Mammary epithelial cell (primary cell): ENCODE measurements at regions of chr17 and their contacts with region 1.

Region 1: DNA sequence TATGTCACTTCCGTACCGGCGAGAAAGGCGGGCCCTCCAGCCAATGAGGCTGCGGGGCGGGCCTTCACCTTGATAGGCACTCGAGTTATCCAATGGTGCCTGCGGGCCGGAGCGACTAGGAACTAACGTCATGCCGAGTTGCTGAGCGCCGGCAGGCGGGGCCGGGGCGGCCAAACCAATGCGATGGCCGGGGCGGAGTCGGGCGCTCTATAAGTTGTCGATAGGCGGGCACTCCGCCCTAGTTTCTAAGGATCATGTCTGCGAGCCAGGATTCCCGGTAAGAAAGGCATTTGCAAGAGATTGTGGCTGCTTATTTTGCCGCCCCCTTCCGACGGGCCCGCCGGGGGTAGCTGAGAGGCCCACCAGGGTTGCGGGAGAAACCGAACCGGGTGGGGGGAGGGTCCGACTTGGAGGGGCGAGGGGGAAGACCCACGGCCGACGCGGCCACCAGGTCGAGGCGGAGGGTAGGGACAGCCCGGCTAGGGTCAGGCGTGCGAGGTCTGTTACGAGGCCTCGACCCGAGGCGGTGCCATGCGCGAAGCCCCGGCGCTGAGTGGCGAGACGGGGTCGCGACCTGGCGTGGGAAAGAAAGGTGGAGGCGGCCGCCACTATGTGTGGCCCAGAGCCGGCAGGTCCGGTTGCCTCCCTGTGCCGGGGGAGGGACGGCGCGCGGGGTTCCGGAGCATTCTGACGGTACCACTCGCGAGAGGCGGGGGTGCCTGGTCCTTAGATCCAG is 6.7 kb upstream of the CD68 start:
- DNase-seq: peak; percentile 99
- H3K4me3 ChIP-seq: peak overlapping the region; percentile 95 to 98 (median 98)
- H3K27ac ChIP-seq: peak overlapping the region; percentile 95
- H3K4me1 ChIP-seq: peaks cover 38% of the 10 kb centered on the region
- H3K27me3 ChIP-seq: no peaks in the 10 kb centered on the region
- CTCF ChIP-seq: no peak

Region 2: DNA sequence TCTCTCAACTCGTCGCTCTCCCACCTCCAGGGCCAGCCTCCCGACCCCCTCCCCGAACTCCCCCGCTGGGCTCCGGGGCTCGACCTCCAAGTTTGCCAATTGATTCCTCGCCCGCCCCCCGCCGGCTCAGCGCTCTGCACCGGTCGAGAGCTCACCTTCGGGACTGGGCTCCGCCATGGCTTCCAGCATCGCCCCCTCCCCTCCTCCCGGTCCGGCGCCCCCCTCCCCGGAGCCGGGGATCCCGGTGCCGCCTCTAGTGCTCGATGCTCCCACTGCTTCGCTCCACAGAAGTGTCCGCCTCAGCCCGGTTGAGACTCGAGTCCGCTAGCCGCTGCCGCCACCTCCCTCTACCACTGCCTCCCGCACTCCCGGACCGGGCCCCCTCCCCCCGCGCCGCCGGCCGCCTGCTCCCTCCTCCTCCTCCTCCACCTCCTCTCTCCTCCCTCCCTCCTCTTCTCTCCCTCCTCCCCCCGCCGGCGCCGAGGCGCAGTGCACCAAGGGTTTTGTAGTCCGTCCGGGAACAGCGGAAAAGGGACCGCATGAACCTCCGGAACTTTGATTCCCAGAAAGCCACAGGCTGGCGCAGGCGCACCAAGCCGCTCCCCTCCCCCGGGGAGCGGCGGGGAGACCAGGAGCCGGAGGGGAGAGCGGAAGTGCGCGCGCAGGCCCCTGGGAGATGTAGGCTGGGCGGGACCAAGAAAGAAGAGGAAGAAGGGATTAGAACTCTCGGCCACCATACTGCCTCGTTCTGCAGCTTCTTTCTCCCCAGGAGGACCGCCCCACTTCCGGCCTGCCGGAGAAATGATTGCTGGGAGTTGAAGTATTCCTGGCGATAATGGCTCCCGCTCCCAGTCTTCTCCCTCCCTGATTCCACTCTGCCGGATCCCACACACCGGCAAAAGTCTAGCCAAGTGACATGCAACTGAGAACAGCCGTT is 333.4 kb before region 1 on chr17 and contains the start of gene PHF23:
- CTCF ChIA-PET with region 1: no interaction called
- dilution Hi-C with region 1: no loop called
- in situ Hi-C with region 1: no loop called
- intact Hi-C with region 1: loop called (anchors 2 kb)
- DNase-seq: peak; percentile 100
- H3K4me3 ChIP-seq: peak within 1 kb of the TSS; percentile 84 to 92 (median 90)
- H3K27ac ChIP-seq: peak within 1 kb of the TSS; percentile 79
- H3K4me1 ChIP-seq: peaks cover 45% of the 10 kb centered on the region
- H3K27me3 ChIP-seq: no peaks in the 10 kb centered on the region
- CTCF ChIP-seq: peak in 1 of 2 donors; percentile 7
- total RNA-seq, gene PHF23: 36.7 to 53.6 TPM

Region 3: DNA sequence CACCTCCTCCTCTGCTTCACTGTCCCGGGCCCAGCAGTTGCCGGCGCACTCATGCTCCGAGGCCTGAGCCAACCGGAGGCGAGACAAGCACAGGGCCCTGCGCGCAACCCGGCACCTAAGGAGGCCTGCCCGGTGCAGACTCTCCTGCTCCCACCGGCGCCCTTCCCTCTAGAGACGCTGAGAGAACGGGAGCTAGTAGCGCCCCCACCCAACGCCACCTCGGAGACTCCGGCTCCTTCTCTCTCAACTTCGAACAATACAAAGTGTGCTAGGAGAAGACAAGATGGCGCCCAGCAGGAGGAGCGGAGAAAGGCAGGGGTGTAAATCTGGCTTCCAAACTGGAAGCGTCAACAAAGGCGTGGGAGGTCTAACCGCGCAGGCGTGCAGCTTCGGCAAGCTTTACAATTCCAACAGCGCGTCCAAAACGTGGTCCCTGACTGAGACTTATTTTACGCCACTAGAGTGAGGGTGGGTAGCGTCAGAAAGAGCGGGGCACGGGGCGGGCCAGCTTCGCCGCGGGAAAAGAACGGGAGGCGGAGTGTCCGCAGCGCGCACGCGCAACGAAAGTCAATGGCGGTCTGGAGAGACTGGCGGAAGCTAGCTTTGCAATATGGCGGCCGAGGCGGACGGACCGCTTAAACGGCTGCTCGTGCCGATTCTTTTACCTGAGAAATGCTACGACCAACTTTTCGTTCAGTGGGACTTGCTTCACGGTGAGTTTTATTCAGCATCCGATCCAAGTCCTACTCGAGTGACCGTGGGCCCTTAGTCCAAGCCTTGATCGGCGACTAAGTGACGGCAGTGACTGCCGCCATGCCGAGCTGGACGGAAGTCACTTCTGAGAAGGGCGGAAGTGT is 10.7 kb after region 1 on chr17 and contains the start of gene MPDU1:
- CTCF ChIA-PET with region 1: no interaction called
- dilution Hi-C with region 1: no loop called
- in situ Hi-C with region 1: no loop called
- intact Hi-C with region 1: loop called (anchors 1 kb)
- DNase-seq: peak; percentile 95
- H3K4me3 ChIP-seq: peak within 1 kb of the TSS; percentile 42 to 63 (median 50)
- H3K27ac ChIP-seq: peak within 1 kb of the TSS; percentile 86
- H3K4me1 ChIP-seq: peaks cover 66% of the 10 kb centered on the region
- H3K27me3 ChIP-seq: no peaks in the 10 kb centered on the region
- CTCF ChIP-seq: no peak
- total RNA-seq, gene MPDU1: 44.8 to 51.2 TPM